Activated naive CD8-positive, alpha-beta T cell treated with anti-CD3 and anti-CD28 coated beads, Interleukin-2, amount 10 ng/mL, durations not matched to agents 7 days and 5 days (primary cell): ENCODE measurements at regions of chr17 and their contacts with region 1.

Region 1: DNA sequence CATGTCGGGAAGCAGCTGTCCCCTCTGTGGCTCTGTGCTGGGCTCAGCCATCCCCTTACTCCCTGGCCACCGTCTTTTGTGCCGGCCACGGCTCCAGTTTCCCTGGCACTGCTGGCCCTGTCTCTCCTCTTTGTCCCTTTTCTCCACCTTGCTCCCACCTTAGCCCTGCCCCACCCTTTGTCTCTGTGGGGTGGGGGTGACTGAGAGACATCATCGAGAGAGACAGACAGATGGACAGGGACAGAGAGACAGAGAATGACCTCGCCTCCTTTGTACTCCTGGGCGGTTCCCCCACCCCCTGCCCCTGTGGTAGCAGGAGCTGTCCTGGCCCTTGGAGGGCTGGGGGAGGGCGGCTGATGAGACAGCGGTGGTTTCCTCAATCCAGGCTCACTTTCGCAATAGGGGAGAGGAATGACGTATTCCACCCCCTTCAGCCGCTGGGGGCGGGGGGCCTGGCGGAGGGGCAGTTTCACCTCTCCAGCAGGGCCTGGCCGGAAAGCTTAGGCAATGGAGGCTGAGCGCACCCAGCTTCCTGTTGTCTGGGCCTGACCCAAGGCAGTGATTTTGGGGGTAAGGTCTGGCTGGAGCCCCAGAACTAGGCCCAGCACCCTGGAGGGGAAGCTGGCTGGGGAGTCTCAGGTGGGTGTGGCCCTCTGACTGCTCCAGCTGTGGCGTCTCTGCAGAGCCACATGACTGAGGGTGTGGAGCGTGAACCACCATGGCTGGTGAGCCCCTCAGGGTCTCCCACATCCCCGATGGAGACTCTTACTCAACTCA is 7.3 kb downstream of the FMNL1 start:
- DNase-seq: peak; percentile 76
- ATAC-seq: peak; percentile 33
- H3K4me3 Mint-ChIP-seq: peak overlapping the region; percentile 100
- H3K27ac Mint-ChIP-seq: peak overlapping the region; percentile 99
- H3K4me1 Mint-ChIP-seq: peaks cover 69% of the 10 kb centered on the region
- H3K27me3 Mint-ChIP-seq: no peaks in the 10 kb centered on the region

Region 2: DNA sequence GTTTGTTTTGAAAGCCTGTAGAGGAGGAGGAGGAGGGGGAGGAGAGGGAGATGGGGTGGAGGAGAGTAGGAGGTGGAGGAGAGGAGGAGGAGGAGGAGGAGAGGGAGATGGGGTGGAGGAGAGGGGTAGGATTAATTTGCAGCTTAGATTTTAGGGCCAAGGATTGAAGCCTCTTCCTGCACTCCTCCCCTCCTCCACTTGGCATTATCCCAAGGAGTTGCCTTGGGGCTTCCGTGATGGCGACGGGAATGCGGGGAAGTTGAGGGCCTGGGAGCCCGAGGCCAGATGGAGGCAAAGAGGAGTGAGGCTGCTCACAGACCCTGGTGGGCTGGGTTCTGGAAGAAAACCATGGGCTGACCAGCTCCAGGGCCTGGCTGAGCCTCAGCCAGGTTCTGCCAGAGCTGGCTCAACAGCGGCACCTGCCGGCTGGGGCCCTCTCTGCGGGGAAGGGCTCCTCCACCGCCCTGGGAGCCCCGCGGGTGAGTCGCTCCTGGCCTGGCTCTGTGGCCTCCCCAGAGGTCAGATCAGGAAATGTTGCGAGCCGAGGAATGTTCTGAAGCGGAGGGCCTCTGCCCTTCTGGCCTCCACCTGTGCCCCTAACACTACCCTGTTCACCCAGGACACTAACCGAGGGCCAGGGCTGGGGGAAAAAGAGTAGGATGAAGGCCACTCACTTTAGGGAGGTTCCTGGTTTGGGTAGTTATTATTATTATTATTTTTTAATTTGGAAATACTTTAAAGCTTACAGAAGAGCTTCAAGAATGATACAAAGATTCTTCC is 31.2 kb before region 1 on chr17:
- POLR2A ChIA-PET with region 1: no interaction called
- DNase-seq: peak; percentile 96
- ATAC-seq: peak; percentile 100
- H3K4me3 Mint-ChIP-seq: no peak overlapping the region
- H3K27ac Mint-ChIP-seq: no peak overlapping the region
- H3K4me1 Mint-ChIP-seq: peaks cover 4% of the 10 kb centered on the region
- H3K27me3 Mint-ChIP-seq: no peaks in the 10 kb centered on the region

Region 3: GRCh38 chr17:45256114-45256966 is 27.4 kb after region 1 on chr17:
- POLR2A ChIA-PET with region 1: interaction called, 91 read pairs
- DNase-seq: no peak
- ATAC-seq: peak; percentile 34
- H3K4me3 Mint-ChIP-seq: peak overlapping the region; percentile 67
- H3K27ac Mint-ChIP-seq: peak overlapping the region; percentile 77
- H3K4me1 Mint-ChIP-seq: peaks cover 48% of the 10 kb centered on the region
- H3K27me3 Mint-ChIP-seq: no peaks in the 10 kb centered on the region

Region 4: GRCh38 chr17:45307290-45308015 is 78.5 kb after region 1 on chr17:
- POLR2A ChIA-PET with region 1: interaction called, 146 read pairs
- DNase-seq: no peak
- ATAC-seq: peak; percentile 6
- H3K4me3 Mint-ChIP-seq: peak overlapping the region; percentile 51
- H3K27ac Mint-ChIP-seq: peak overlapping the region; percentile 77
- H3K4me1 Mint-ChIP-seq: peaks cover 67% of the 10 kb centered on the region
- H3K27me3 Mint-ChIP-seq: no peaks in the 10 kb centered on the region